GM12878 (cell line): ENCODE measurements at regions of chr3 and their contacts with region 1.

Region 1: DNA sequence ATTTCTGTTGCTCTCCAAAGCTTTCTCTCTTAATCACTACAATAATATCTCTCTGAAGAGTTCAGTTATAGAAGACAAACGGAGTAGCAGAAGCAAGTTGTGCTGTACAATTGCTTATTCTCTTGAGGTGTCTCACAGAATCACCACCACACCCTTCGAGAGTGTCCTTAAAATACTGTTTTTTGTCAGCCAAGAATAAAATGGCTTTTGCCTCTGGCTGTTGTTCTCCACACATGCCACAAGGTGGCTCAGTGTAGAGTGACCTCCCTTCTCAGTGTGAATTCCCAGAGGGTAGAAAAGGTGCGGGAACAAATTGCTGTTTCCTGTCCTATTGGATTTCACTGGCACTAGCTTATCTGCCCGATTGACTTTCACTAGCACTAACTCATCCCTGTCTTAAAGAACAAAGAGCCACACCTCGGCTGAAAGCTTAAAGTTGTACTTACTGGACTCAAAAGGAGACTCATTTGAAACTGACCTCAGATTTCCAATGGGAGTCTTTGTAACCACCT is 134.2 kb upstream of the SATB1 start:
- DNase-seq: no peak
- ATAC-seq: peak; percentile 77
- H3K4me3 ChIP-seq: no peak overlapping the region
- H3K27ac ChIP-seq: no peak overlapping the region
- H3K4me1 ChIP-seq: no peaks in the 10 kb centered on the region
- H3K27me3 ChIP-seq: no peaks in the 10 kb centered on the region
- CTCF ChIP-seq: peak; percentile 70 to 74 (median 72); a peak in 5 of 6 replicates
- EP300 ChIP-seq: no peak
- POLR2A ChIP-seq: no peak
- RAD21 ChIP-seq: peak; percentile 68

Region 2: DNA sequence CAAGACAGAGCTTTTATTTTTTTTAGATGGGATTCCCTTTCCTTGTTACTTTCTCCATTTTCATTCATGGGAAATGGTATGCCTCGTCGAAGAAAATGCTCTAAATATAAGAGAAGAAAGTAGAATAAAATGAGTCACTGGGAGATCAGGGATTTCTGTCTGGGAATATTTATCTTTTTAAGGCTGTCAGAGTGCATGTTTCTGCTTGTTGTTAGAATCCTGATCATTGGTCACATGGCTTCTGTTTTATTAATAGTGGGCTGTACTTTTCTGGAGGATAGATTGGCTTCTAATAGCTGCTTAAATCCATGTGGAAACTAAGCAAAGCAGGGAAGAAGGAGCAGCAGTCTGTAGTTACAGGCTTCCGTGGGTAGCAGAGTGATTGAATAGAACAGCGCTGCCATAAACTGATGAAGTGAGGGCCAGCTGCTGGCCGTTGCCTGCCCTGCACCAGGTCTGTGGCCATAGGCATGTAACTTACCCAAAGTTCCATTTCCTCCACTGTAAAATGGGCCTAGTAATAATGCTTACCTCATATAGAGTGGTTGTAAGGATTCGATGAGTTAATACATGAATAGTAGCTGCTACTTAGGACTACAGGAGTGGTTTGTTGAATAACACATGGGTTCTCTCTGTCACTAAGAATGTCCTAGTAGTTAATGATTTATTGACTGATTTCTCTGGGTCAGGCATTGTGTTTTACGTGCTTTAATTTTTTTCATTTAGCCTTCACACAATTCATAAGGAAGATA is 424.1 kb before region 1 on chr3:
- CTCF ChIA-PET with region 1: no interaction called
- POLR2A ChIA-PET with region 1: no interaction called
- RAD21 ChIA-PET with region 1: no interaction called
- SMC1A ChIA-PET with region 1: no interaction called
- in situ Hi-C with region 1: no loop called
- intact Hi-C with region 1: no loop called
- DNase-seq: no peak
- ATAC-seq: peak; percentile 51
- H3K4me3 ChIP-seq: no peak overlapping the region
- H3K27ac ChIP-seq: no peak overlapping the region
- H3K4me1 ChIP-seq: no peaks in the 10 kb centered on the region
- H3K27me3 ChIP-seq: no peaks in the 10 kb centered on the region
- CTCF ChIP-seq: no peak
- EP300 ChIP-seq: no peak
- POLR2A ChIP-seq: no peak
- RAD21 ChIP-seq: no peak

Region 3: DNA sequence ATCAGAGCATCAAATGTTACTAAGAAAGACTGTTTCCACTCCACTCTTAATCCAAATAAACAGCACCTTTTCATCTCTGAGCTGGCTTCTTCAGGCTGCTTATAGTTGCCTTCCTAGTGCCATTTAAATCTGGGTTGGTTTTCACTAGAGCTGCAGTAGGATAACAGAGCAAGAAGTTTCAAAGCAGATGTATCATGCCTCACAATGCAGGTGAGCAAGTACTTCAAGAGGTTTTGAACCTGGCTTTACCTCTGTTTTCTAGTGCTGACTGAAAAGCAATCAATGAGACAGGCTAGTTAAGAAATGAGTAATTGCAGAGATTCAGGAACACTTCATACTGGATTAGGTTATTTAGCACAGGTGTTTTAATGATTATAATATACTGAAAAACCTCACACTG is 13.4 kb after region 1 on chr3:
- CTCF ChIA-PET with region 1: interaction called, 10 read pairs
- POLR2A ChIA-PET with region 1: no interaction called
- RAD21 ChIA-PET with region 1: no interaction called
- SMC1A ChIA-PET with region 1: interaction called, 8 read pairs
- in situ Hi-C with region 1: no loop called
- intact Hi-C with region 1: no loop called
- DNase-seq: no peak
- ATAC-seq: no peak
- H3K4me3 ChIP-seq: no peak overlapping the region
- H3K27ac ChIP-seq: no peak overlapping the region
- H3K4me1 ChIP-seq: no peaks in the 10 kb centered on the region
- H3K27me3 ChIP-seq: no peaks in the 10 kb centered on the region
- CTCF ChIP-seq: no peak
- EP300 ChIP-seq: no peak
- POLR2A ChIP-seq: no peak
- RAD21 ChIP-seq: no peak

Region 4: GRCh38 chr3:18703798-18704197 is 144.4 kb after region 1 on chr3:
- CTCF ChIA-PET with region 1: interaction called, 3 read pairs
- POLR2A ChIA-PET with region 1: no interaction called
- RAD21 ChIA-PET with region 1: interaction called, 4 read pairs
- SMC1A ChIA-PET with region 1: no interaction called
- in situ Hi-C with region 1: no loop called
- intact Hi-C with region 1: loop called (anchors 5 kb)
- DNase-seq: no peak
- ATAC-seq: no peak
- H3K4me3 ChIP-seq: no peak overlapping the region
- H3K27ac ChIP-seq: no peak overlapping the region
- H3K4me1 ChIP-seq: no peaks in the 10 kb centered on the region
- H3K27me3 ChIP-seq: no peaks in the 10 kb centered on the region
- CTCF ChIP-seq: peak in 1 of 3 experiments; percentile 6; a peak in 1 of 6 replicates
- EP300 ChIP-seq: no peak
- POLR2A ChIP-seq: no peak
- RAD21 ChIP-seq: 0 out of 2 replicates have a peak, but pooled peaks have one; percentile 27

Region 5: DNA sequence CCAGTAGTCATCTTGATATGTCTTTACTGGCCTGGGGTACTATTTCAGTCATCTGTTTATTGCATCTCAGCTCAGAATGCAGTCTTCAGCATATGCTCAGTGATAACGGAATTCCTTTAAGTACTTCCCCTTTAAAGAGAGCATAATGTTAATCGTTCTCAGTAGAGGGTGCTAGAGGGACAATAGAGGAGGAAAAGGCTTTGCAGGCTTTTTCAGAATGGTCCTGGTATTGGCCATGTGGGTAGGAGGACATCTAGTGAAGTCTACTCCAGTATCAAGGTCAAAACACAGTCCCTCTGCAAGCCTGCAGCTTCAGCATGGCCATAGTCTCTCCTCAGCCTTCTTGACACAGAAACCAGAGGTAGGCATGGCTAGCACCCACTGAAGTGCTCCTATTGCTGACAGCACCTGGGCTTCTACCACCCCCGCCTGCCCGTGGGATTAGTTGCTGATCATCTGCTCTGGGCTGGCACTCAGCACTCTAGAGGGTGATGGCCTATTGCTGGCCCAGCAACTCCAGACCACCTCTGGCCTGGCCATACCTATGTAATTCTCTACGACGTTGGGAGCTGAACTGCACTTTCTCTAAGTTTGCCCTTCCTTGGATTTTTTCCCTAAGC is 654.3 kb after region 1 on chr3:
- CTCF ChIA-PET with region 1: no interaction called
- POLR2A ChIA-PET with region 1: no interaction called
- RAD21 ChIA-PET with region 1: no interaction called
- SMC1A ChIA-PET with region 1: no interaction called
- in situ Hi-C with region 1: no loop called
- intact Hi-C with region 1: no loop called
- DNase-seq: no peak
- ATAC-seq: peak; percentile 69
- H3K4me3 ChIP-seq: no peak overlapping the region
- H3K27ac ChIP-seq: no peak overlapping the region
- H3K4me1 ChIP-seq: no peaks in the 10 kb centered on the region
- H3K27me3 ChIP-seq: no peaks in the 10 kb centered on the region
- CTCF ChIP-seq: peak; percentile 24 to 35 (median 26); a peak in 3 of 6 replicates
- EP300 ChIP-seq: no peak
- POLR2A ChIP-seq: no peak
- RAD21 ChIP-seq: peak; percentile 55